ENCODE measurements at regions of chr19 and their contacts with region 1.

Region 1: DNA sequence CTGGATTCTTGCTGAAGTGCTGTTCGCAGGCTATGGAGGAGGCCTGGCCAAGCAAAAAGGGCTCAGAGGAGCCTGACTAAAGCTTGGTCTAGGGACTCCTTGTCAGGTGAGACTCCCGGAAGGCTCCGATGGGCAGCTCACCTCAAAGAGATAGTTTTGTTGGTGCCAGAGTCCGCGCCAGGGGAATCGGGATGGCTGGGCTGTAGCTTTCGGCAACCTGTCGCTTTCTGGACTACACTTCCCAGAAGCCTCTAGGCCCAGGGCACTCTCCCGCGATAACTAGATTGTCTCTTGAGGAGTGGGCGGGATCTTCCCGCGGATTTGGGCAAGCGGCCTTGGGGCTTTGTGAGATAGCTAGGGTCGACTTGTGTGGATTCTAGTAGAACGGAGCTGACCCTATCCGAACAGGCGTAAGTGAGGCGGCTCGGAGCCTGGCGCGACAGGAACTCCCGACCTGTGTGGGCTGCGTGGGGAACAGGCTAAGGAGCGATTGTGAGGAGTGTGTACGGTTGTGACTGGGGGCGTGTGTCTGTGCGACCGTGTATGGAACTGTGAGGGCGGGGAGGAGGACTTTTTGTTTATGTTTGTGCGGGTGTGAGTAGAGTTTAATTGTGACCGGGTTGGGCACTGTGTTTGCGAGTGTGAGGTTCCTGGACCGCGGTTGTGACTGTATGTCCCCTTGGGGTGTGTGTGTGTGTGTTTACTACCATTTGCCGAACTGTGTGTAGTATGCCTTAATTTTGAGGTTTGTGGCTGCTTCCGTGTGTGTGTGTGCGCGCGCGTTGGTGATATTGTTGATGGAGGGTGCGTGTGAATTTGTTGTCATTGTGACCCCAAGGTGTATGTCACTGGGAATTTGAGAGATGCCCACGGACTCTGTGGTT is at the start of gene ZNF345:
- DNase-seq: peak; percentile 62 to 91 (median 88)
- ATAC-seq: peak; percentile 93
- H3K4me3 ChIP-seq: peak within 1 kb of the TSS; percentile 92
- H3K4me3 Mint-ChIP-seq: no peak within 1 kb of the TSS
- H3K27ac ChIP-seq: peak within 1 kb of the TSS; percentile 86
- H3K27ac Mint-ChIP-seq: no peak within 1 kb of the TSS
- H3K4me1 ChIP-seq: peaks cover 9 to 16% of the 10 kb centered on the region in 2 donors
- H3K4me1 Mint-ChIP-seq: peaks cover 0 to 22% (median 13%) of the 10 kb centered on the region in 7 donors
- H3K27me3 ChIP-seq: no peaks in the 10 kb centered on the region
- H3K27me3 Mint-ChIP-seq: no peaks in the 10 kb centered on the region
- total RNA-seq, gene ZNF345: 6.8 to 18.2 (median 7.8) TPM

Region 2: GRCh38 chr19:36139473-36140303 is 711.1 kb before region 1 on chr19 and contains the start of gene CAPNS1:
- CTCF ChIA-PET with region 1: no interaction called
- POLR2A ChIA-PET with region 1: no interaction called
- intact Hi-C with region 1: loop called (anchors 2 to 5 kb)
- DNase-seq: peak; percentile 82 to 95 (median 86)
- ATAC-seq: peak; percentile 83
- H3K4me3 ChIP-seq: peak within 1 kb of the TSS; percentile 99
- H3K4me3 Mint-ChIP-seq: peak within 1 kb of the TSS; percentile 91 to 98 (median 95)
- H3K27ac ChIP-seq: peak within 1 kb of the TSS; percentile 87
- H3K27ac Mint-ChIP-seq: peak within 1 kb of the TSS; percentile 85 to 97 (median 91)
- H3K4me1 ChIP-seq: peaks cover 6 to 9% of the 10 kb centered on the region in 2 donors
- H3K4me1 Mint-ChIP-seq: peaks cover 10 to 25% (median 15%) of the 10 kb centered on the region in 7 donors
- H3K27me3 ChIP-seq: no peaks in the 10 kb centered on the region
- H3K27me3 Mint-ChIP-seq: no peaks in the 10 kb centered on the region
- total RNA-seq, gene CAPNS1: 197 to 473 (median 207) TPM

Region 3: DNA sequence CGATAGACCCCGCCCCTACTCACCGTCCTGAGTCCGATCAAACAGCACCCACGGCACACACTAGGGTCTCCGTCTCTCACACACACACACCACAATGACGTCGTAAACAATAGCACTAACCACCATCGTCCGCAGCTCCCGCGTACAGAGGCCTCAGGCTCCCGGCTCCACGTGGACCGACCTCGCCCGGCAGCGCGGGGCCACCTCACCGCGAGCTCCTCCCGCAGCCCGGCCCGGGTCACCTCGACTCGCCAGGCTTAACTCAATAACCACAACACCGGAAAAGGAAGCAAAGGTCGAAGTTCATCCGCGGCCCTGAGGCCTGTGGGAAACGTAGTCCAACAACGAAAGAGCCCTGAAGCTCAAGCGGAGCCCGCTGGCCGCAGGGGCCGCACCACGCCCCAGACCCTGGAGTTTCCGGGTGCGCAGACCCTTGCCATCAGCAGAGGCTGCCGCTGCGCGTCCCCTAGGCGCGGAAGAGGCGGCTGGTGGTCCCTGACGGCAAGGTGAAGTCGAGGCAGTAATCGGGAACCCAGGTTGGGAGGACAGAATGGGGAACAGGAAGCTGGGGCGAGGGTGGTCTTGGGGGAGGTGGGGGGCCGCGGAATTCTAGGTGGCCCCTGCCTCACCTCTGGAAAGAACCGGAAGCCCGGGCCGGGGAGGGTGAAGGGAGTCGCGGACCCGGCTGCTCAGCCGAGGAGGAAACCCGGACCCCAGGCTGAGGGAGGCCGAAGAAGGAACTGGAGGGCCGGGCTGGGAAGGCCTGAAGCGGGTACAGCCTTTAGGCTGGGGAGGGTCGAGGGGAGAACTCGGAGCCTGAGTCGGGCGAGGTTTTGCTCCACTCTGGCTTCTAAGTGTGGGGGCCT is 277.5 kb before region 1 on chr19 and contains the start of gene ZNF529:
- CTCF ChIA-PET with region 1: interaction called, 3 read pairs
- POLR2A ChIA-PET with region 1: interaction called, 3 read pairs
- intact Hi-C with region 1: loop called (anchors 1 kb)
- DNase-seq: peak; percentile 67 to 95 (median 85)
- ATAC-seq: peak; percentile 95
- H3K4me3 ChIP-seq: peak within 1 kb of the TSS; percentile 95
- H3K4me3 Mint-ChIP-seq: peak within 1 kb of the TSS; percentile 80 to 100 (median 93)
- H3K27ac ChIP-seq: peak within 1 kb of the TSS; percentile 98
- H3K27ac Mint-ChIP-seq: peak within 1 kb of the TSS; percentile 94 to 100 (median 98)
- H3K4me1 ChIP-seq: peaks cover 0 to 15% of the 10 kb centered on the region in 2 donors
- H3K4me1 Mint-ChIP-seq: peaks cover 23 to 46% (median 40%) of the 10 kb centered on the region in 7 donors
- H3K27me3 ChIP-seq: no peaks in the 10 kb centered on the region
- H3K27me3 Mint-ChIP-seq: no peaks in the 10 kb centered on the region
- total RNA-seq, gene ZNF529: 22.6 to 37.8 (median 33.8) TPM

Region 4: GRCh38 chr19:36665832-36666231 is 185.0 kb before region 1 on chr19:
- CTCF ChIA-PET with region 1: no interaction called
- POLR2A ChIA-PET with region 1: interaction called, 10 read pairs
- intact Hi-C with region 1: loop called (anchors 1 to 5 kb)
- DNase-seq: peak in 1 of 9 donors; percentile 2
- ATAC-seq: no peak
- H3K4me3 ChIP-seq: peak overlapping the region; percentile 88
- H3K4me3 Mint-ChIP-seq: peak overlapping the region; percentile 91 to 100 (median 98)
- H3K27ac ChIP-seq: no peak overlapping the region
- H3K27ac Mint-ChIP-seq: peak overlapping the region; percentile 29 to 99 (median 93)
- H3K4me1 ChIP-seq: peaks cover 0 to 10% of the 10 kb centered on the region in 2 donors
- H3K4me1 Mint-ChIP-seq: peaks cover 17 to 42% (median 35%) of the 10 kb centered on the region in 7 donors
- H3K27me3 ChIP-seq: no peaks in the 10 kb centered on the region
- H3K27me3 Mint-ChIP-seq: no peaks in the 10 kb centered on the region

Region 5: GRCh38 chr19:36837906-36838783 is 12.7 kb before region 1 on chr19 and contains the start of gene ZNF790:
- CTCF ChIA-PET with region 1: interaction called, 3 read pairs
- POLR2A ChIA-PET with region 1: interaction called, 108 read pairs
- intact Hi-C with region 1: loop called (anchors 1 kb)
- DNase-seq: peak; percentile 68 to 91 (median 85)
- ATAC-seq: peak; percentile 95
- H3K4me3 ChIP-seq: peak within 1 kb of the TSS; percentile 92
- H3K4me3 Mint-ChIP-seq: peak within 1 kb of the TSS in 1 of 10 donors; percentile 22
- H3K27ac ChIP-seq: peak within 1 kb of the TSS; percentile 92
- H3K27ac Mint-ChIP-seq: peak within 1 kb of the TSS in 5 of 9 donors; percentile 39 to 65 (median 51)
- H3K4me1 ChIP-seq: peaks cover 6 to 11% of the 10 kb centered on the region in 2 donors
- H3K4me1 Mint-ChIP-seq: peaks cover 0 to 21% (median 14%) of the 10 kb centered on the region in 7 donors
- H3K27me3 ChIP-seq: no peaks in the 10 kb centered on the region
- H3K27me3 Mint-ChIP-seq: no peaks in the 10 kb centered on the region
- total RNA-seq, gene ZNF790: 2.6 to 14.4 (median 7.3) TPM

Measured in naive thymus-derived CD4-positive, alpha-beta T cell (primary cell).